ENCODE measurements at regions of chr11 and their contacts with region 1.

Region 1: GRCh38 chr11:119108146-119108856 is 1.2 kb downstream of the C2CD2L start:
- DNase-seq: peak; percentile 49
- H3K4me3 ChIP-seq: peak overlapping the region; percentile 85 to 86
- H3K27ac ChIP-seq: no peak overlapping the region; a peak in 1 of 4 replicates
- H3K4me1 ChIP-seq: peaks cover 24 to 27% of the 10 kb centered on the region in 2 experiments
- H3K27me3 ChIP-seq: no peaks in the 10 kb centered on the region
- CTCF ChIP-seq: no peak
- EP300 ChIP-seq: no peak
- RAD21 ChIP-seq: no peak

Region 2: DNA sequence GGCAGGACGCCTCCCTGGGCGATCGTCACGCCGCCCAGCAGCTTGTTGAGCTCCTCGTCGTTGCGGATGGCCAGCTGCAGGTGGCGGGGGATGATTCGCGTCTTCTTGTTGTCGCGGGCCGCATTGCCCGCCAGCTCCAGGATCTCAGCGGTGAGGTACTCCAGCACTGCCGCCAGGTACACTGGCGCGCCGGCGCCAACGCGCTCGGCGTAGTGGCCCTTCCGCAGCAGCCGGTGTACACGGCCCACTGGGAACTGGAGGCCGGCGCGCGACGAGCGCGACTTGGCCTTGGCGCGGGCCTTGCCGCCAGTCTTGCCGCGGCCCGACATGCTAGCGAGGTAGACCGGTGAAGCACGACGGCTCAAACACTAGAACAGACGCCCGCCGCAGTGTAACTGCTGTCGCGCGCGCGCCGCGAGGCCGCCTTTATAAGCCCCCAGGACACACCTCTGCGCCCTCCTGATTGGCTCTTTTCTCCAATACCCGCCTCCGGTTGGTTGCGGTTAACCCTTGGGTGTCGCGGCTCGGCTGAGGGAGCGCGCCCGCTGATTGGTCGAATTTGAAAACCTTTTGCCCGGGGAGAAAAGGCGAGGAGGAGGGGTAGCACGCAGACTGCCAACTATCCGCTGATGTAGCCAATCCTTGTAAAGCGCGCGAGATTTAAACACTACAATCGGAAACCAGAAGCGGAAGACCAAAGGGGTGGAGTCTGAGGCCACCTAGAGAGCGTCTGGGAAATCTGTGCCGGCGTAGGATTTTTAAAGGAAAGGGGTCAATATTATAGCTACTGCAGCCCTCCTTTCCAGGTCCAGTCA is 13.0 kb before region 1 on chr11:
- CTCF ChIA-PET with region 1: interaction called, 15 read pairs
- POLR2A ChIA-PET with region 1: interaction called, 17 read pairs
- DNase-seq: peak; percentile 96
- H3K4me3 ChIP-seq: peak overlapping the region; percentile 84 to 87
- H3K27ac ChIP-seq: peak overlapping the region; percentile 72 to 89
- H3K4me1 ChIP-seq: peaks cover 22 to 24% of the 10 kb centered on the region in 2 experiments; a peak in 3 of 4 replicates
- H3K27me3 ChIP-seq: no peaks in the 10 kb centered on the region
- CTCF ChIP-seq: 0 out of 2 replicates have a peak, but pooled peaks have one; percentile 14
- EP300 ChIP-seq: peak in 1 of 2 experiments; percentile 57; a peak in 1 of 4 replicates
- RAD21 ChIP-seq: peak; percentile 31

Region 3: GRCh38 chr11:119121008-119121810 is 12.9 kb after region 1 on chr11 and contains the start of gene HINFP:
- CTCF ChIA-PET with region 1: interaction called, 3 read pairs
- POLR2A ChIA-PET with region 1: interaction called, 11 read pairs
- DNase-seq: peak; percentile 98
- H3K4me3 ChIP-seq: peak within 1 kb of the TSS; percentile 88 to 90
- H3K27ac ChIP-seq: peak within 1 kb of the TSS; percentile 55 to 92; a peak in 3 of 4 replicates
- H3K4me1 ChIP-seq: peaks cover 13 to 17% of the 10 kb centered on the region in 2 experiments; a peak in 3 of 4 replicates
- H3K27me3 ChIP-seq: no peaks in the 10 kb centered on the region
- CTCF ChIP-seq: no peak
- EP300 ChIP-seq: no peak
- RAD21 ChIP-seq: no peak
- polyA plus RNA-seq, gene HINFP: 21.8 and 36.1 TPM in 2 replicates

Region 4: DNA sequence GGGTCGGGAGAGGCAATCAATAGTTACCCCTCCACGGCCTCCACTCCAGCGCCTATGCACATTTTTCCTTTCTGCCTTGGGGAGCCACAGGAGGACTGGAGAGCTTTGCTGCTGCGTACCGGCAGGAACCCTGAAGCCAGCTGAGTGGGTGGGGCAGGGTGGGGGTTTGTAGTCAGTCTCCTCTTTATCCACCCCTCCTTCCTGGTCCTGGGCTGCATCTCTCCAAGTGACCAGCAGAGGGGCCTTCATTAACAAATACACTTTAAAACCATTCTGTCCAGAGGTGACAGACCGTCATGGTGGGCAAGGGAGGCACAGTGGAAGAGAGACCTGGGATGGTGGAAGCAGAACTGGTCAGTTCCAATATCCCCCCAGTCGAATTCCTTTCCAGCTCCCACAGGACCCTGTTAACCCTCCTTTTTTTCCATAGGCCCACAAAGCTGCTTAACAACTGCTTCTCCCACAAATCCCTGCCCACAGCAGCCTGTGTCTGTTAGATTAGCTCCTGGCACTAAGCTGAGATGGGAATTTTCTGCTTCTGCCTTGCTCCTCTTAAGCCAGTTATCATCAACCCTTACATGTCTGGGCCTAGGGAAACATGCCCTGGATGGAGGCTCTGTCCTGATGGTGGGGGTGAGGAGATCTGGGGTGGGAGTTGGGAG is 36.7 kb after region 1 on chr11:
- CTCF ChIA-PET with region 1: interaction called, 15 read pairs
- POLR2A ChIA-PET with region 1: no interaction called
- DNase-seq: peak; percentile 93
- H3K4me3 ChIP-seq: no peak overlapping the region
- H3K27ac ChIP-seq: no peak overlapping the region
- H3K4me1 ChIP-seq: peaks cover 0 to 13% of the 10 kb centered on the region in 2 experiments; a peak in 1 of 4 replicates
- H3K27me3 ChIP-seq: no peaks in the 10 kb centered on the region; the same call in 1 of the 2 replicates
- CTCF ChIP-seq: peak; percentile 60
- EP300 ChIP-seq: no peak
- RAD21 ChIP-seq: peak; percentile 68